CD14-positive monocyte (primary cell): ENCODE measurements at regions of chr16 and their contacts with region 1.

Region 1: GRCh38 chr16:21599233-21600030 is at the start of gene METTL9:
- DNase-seq: peak; percentile 90 to 94 (median 91)
- H3K4me3 ChIP-seq: peak within 1 kb of the TSS; percentile 83 to 98 (median 88)
- H3K4me3 Mint-ChIP-seq: peak within 1 kb of the TSS; percentile 89 to 95
- H3K27ac ChIP-seq: peak within 1 kb of the TSS; percentile 96
- H3K27ac Mint-ChIP-seq: peak within 1 kb of the TSS; percentile 91 to 98 (median 96)
- H3K4me1 ChIP-seq: peaks cover 63 to 79% of the 10 kb centered on the region in 2 donors
- H3K4me1 Mint-ChIP-seq: peaks cover 61% of the 10 kb centered on the region
- H3K27me3 ChIP-seq: no peaks in the 10 kb centered on the region
- H3K27me3 Mint-ChIP-seq: no peaks in the 10 kb centered on the region
- CTCF ChIP-seq: no peak
- polyA plus RNA-seq, gene METTL9: 181 to 400 (median 373) TPM

Region 2: GRCh38 chr16:21554795-21555585 is 44.4 kb before region 1 on chr16:
- intact Hi-C with region 1: no loop called
- DNase-seq: peak; percentile 84 to 92 (median 85)
- H3K4me3 ChIP-seq: peak overlapping the region in 1 of 3 experiments; percentile 48
- H3K4me3 Mint-ChIP-seq: peak overlapping the region; percentile 69 to 88
- H3K27ac ChIP-seq: no peak overlapping the region
- H3K27ac Mint-ChIP-seq: peak overlapping the region in 2 of 7 donors; percentile 19 to 69
- H3K4me1 ChIP-seq: peaks cover 7 to 10% of the 10 kb centered on the region in 2 donors
- H3K4me1 Mint-ChIP-seq: peaks cover 7% of the 10 kb centered on the region
- H3K27me3 ChIP-seq: no peaks in the 10 kb centered on the region
- H3K27me3 Mint-ChIP-seq: peaks cover 3 to 4% (median 3%) of the 10 kb centered on the region in 3 donors
- CTCF ChIP-seq: peak; percentile 100

Region 3: DNA sequence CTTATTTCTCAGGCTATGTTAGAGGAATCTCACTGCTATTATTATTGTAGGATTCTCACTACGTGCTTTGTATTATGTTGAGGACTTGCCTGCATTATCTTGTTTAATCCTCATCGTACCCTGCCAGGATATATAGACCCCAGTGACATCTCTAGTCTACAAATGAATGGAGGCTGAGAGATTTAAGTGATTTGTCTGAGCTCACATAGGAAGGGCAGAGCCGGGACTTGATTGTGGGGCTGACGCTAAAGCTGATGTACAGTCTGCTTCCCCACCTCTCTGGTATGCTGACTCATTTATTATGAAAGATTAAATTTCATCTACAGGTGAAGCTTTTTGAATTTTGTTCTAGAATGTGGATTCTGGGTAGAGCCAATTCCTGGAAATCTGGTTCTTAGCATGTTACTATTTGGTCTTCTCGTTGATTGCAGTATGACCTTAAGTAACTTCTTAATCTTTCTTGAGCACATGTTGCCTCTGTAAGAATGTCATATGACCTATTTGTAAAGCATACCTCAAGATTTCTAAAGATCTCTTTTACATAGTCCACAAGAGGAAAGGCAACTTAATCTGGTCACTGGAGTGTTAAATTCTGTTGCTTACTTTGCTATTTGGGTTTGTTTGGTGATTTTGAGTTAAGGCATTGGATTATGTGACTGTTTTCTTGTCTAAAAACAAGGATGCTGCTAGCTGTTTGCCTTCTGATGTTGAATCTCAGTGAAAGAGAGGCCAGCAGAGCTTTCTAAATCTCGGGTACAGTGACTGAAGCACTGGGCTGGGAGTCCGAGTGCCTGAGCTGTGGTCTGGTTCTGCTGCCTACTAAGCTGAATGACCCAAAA is 12.3 kb after region 1 on chr16:
- intact Hi-C with region 1: no loop called
- DNase-seq: peak; percentile 44 to 73 (median 61)
- H3K4me3 ChIP-seq: peak overlapping the region in 2 of 3 experiments; percentile 39 to 63
- H3K4me3 Mint-ChIP-seq: peak overlapping the region; percentile 60 to 82
- H3K27ac ChIP-seq: peak overlapping the region; percentile 93 to 95
- H3K27ac Mint-ChIP-seq: peak overlapping the region; percentile 95 to 98 (median 97)
- H3K4me1 ChIP-seq: peaks cover 99 to 100% of the 10 kb centered on the region in 2 donors
- H3K4me1 Mint-ChIP-seq: peaks cover 96% of the 10 kb centered on the region
- H3K27me3 ChIP-seq: no peaks in the 10 kb centered on the region
- H3K27me3 Mint-ChIP-seq: no peaks in the 10 kb centered on the region
- CTCF ChIP-seq: no peak

Region 4: DNA sequence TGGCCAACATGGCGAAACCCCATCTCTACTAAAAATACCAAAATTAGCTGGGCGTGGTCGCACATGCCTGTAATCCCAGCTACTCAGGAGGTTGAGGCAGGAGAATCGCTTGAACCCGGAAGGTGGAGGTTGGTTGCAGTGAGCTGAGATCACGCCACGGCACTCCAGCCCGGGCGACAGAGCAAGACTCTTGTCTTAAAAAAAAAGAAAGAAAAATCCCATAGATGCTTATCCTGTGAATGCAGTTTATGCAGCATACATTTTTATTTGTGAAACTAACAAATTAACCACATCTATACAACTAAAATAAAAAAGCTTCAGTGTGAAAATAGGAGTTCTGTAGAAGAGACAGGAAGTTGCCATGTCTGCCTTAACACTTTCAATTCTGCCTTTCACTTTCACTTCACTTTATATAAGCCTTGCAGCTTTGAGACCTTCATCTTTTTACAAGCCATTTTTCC is 45.9 kb after region 1 on chr16:
- intact Hi-C with region 1: loop called in 1 of 2 experiments (anchors 5 kb)
- DNase-seq: peak in 2 of 3 donors; percentile 68 to 81
- H3K4me3 ChIP-seq: peak overlapping the region; percentile 39 to 98 (median 90)
- H3K4me3 Mint-ChIP-seq: peak overlapping the region; percentile 78 to 87
- H3K27ac ChIP-seq: peak overlapping the region; percentile 77 to 82
- H3K27ac Mint-ChIP-seq: peak overlapping the region; percentile 89 to 97 (median 95)
- H3K4me1 ChIP-seq: peaks cover 92 to 97% of the 10 kb centered on the region in 2 donors
- H3K4me1 Mint-ChIP-seq: peaks cover 71% of the 10 kb centered on the region
- H3K27me3 ChIP-seq: no peaks in the 10 kb centered on the region
- H3K27me3 Mint-ChIP-seq: no peaks in the 10 kb centered on the region
- CTCF ChIP-seq: no peak

Region 5: GRCh38 chr16:21656795-21657768 is 57.6 kb after region 1 on chr16:
- intact Hi-C with region 1: no loop called
- DNase-seq: peak; percentile 50 to 69 (median 64)
- H3K4me3 ChIP-seq: peak overlapping the region in 2 of 3 experiments; percentile 22 to 55
- H3K4me3 Mint-ChIP-seq: peak overlapping the region; percentile 47 to 69
- H3K27ac ChIP-seq: peak overlapping the region; percentile 36 to 77
- H3K27ac Mint-ChIP-seq: peak overlapping the region; percentile 87 to 97 (median 94)
- H3K4me1 ChIP-seq: peaks cover 71 to 75% of the 10 kb centered on the region in 2 donors
- H3K4me1 Mint-ChIP-seq: peaks cover 78% of the 10 kb centered on the region
- H3K27me3 ChIP-seq: no peaks in the 10 kb centered on the region
- H3K27me3 Mint-ChIP-seq: peaks cover 0 to 5% (median under 1%) of the 10 kb centered on the region in 3 donors
- CTCF ChIP-seq: peak; percentile 94